ENCODE measurements at regions of chr1 and their contacts with region 1.

Region 1: DNA sequence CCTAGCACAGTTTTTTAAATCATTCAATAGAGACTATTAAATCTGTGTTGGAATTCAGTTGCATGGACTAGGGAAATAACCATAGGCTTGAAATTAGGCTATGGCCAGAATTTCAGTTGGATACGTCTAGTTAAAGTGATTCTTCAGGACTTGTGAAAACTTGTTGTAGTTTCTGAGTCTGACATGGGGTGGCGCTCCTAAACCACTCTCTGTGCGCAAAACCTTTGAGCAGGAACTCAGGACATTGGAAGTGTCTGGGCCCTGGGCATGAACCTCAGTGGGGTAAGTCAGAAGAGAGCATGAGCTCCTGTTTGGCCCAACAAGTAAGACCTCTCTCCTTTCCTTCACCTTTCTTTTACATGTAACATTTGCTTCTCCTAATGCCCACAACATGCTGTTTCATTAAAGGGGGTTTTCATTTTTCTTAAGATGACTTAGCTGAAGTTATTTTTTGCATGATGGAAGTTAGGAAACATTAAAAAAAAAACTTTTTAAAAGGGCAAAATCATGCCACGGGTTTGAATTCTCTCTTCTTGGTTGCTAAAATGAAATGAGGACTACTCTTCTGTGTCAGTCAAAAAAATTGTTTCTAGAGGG is 17.1 kb upstream of the CCDC190 start:
- DNase-seq: peak; percentile 36 to 52 (median 50)
- H3K4me3 ChIP-seq: no peak overlapping the region
- H3K4me3 Mint-ChIP-seq: no peak overlapping the region
- H3K27ac ChIP-seq: no peak overlapping the region
- H3K27ac Mint-ChIP-seq: no peak overlapping the region
- H3K4me1 ChIP-seq: peaks cover 3 to 8% of the 10 kb centered on the region in 2 donors
- H3K4me1 Mint-ChIP-seq: peaks cover 13% of the 10 kb centered on the region
- H3K27me3 ChIP-seq: peaks cover 16% of the 10 kb centered on the region in 2 donors
- H3K27me3 Mint-ChIP-seq: peaks cover 8 to 30% (median 9%) of the 10 kb centered on the region in 3 donors
- CTCF ChIP-seq: peak; percentile 89

Region 2: GRCh38 chr1:163174524-163175437 is 296.7 kb after region 1 on chr1:
- intact Hi-C with region 1: loop called (anchors 1 to 2 kb)
- DNase-seq: peak; percentile 17 to 23 (median 20)
- H3K4me3 ChIP-seq: no peak overlapping the region
- H3K4me3 Mint-ChIP-seq: peak overlapping the region in 1 of 2 donors; percentile 1
- H3K27ac ChIP-seq: no peak overlapping the region
- H3K27ac Mint-ChIP-seq: no peak overlapping the region
- H3K4me1 ChIP-seq: no peaks in the 10 kb centered on the region
- H3K4me1 Mint-ChIP-seq: peaks cover 2% of the 10 kb centered on the region
- H3K27me3 ChIP-seq: no peaks in the 10 kb centered on the region
- H3K27me3 Mint-ChIP-seq: peaks cover 0 to 2% (median 2%) of the 10 kb centered on the region in 3 donors
- CTCF ChIP-seq: peak; percentile 80

Region 3: GRCh38 chr1:163315773-163316374 is 437.8 kb after region 1 on chr1:
- intact Hi-C with region 1: loop called (anchors 5 to 10 kb)
- DNase-seq: peak; percentile 12 to 49 (median 29)
- H3K4me3 ChIP-seq: no peak overlapping the region
- H3K4me3 Mint-ChIP-seq: no peak overlapping the region
- H3K27ac ChIP-seq: no peak overlapping the region
- H3K27ac Mint-ChIP-seq: no peak overlapping the region
- H3K4me1 ChIP-seq: peaks cover 2 to 6% of the 10 kb centered on the region in 2 donors
- H3K4me1 Mint-ChIP-seq: peaks cover 2% of the 10 kb centered on the region
- H3K27me3 ChIP-seq: no peaks in the 10 kb centered on the region
- H3K27me3 Mint-ChIP-seq: peaks cover 0 to 1% (median 0%) of the 10 kb centered on the region in 3 donors
- CTCF ChIP-seq: peak; percentile 82